Activated T-helper 1 cell treated with anti-CD3 and anti-CD28 coated beads, Interleukin-12 subunit alpha, Interleukin-12 subunit beta, Interleukin-2, Interleukin-4 antibody, amounts not matched to agents 30 ng/mL and 10 ng/mL and 1 ng/mL, durations not matched to agents 14 hours and 24 hours and 36 hours (primary cell): ENCODE measurements at regions of chr14 and their contacts with region 1.

Region 1: DNA sequence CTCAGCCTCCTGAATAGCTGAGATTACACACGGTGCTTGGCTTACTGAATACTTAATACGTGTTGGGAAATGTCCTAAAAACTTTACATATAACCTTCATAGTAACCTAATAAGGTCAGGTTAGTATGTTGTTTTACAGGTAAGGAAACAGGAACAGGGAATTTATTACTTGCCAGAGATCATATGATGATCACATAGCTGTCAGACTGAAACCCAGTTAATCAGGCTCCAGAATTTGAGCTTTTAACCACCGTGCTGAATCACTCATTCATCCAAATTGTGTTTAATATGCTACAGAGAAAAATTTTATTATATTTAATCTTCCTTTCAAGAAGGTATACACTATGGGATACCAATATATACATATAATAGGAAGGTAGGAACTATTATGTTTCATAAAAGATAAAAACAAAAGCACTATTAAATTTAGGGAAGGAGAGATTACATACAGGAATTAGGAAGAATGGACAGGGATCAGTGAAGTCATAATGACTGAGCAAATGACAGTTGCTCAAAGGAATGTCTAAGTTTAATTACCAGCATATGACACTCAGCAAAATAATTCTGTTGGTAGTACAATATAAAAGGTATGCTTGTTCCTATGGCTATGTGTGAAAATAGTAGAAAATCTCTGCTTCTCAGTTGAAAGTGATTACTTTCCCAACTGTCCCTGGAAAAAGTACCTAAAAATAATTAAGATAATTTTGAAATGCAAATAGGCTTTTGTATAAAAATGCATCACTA is 59.3 kb downstream of the HEATR5A start:
- DNase-seq: no peak
- H3K4me3 Mint-ChIP-seq: no peak overlapping the region
- H3K27ac Mint-ChIP-seq: no peak overlapping the region
- H3K4me1 Mint-ChIP-seq: no peaks in the 10 kb centered on the region
- H3K27me3 Mint-ChIP-seq: no peaks in the 10 kb centered on the region

Region 2: GRCh38 chr14:30982533-30982932 is 378.6 kb before region 1 on chr14:
- intact Hi-C with region 1: loop called (anchors 1 kb)
- DNase-seq: no peak
- H3K4me3 Mint-ChIP-seq: no peak overlapping the region
- H3K27ac Mint-ChIP-seq: no peak overlapping the region
- H3K4me1 Mint-ChIP-seq: no peaks in the 10 kb centered on the region
- H3K27me3 Mint-ChIP-seq: no peaks in the 10 kb centered on the region

Region 3: GRCh38 chr14:31084385-31084784 is 276.7 kb before region 1 on chr14:
- intact Hi-C with region 1: loop called (anchors 5 kb)
- DNase-seq: no peak
- H3K4me3 Mint-ChIP-seq: no peak overlapping the region
- H3K27ac Mint-ChIP-seq: no peak overlapping the region
- H3K4me1 Mint-ChIP-seq: no peaks in the 10 kb centered on the region
- H3K27me3 Mint-ChIP-seq: no peaks in the 10 kb centered on the region

Region 4: GRCh38 chr14:31127690-31128089 is 233.4 kb before region 1 on chr14:
- intact Hi-C with region 1: loop called (anchors 5 kb)
- DNase-seq: peak; percentile 56
- H3K4me3 Mint-ChIP-seq: peak overlapping the region; percentile 16
- H3K27ac Mint-ChIP-seq: peak overlapping the region; percentile 64
- H3K4me1 Mint-ChIP-seq: peaks cover 31% of the 10 kb centered on the region
- H3K27me3 Mint-ChIP-seq: no peaks in the 10 kb centered on the region

Region 5: GRCh38 chr14:31159682-31160296 is 201.3 kb before region 1 on chr14:
- intact Hi-C with region 1: loop called (anchors 5 kb)
- DNase-seq: no peak
- H3K4me3 Mint-ChIP-seq: no peak overlapping the region
- H3K27ac Mint-ChIP-seq: no peak overlapping the region
- H3K4me1 Mint-ChIP-seq: no peaks in the 10 kb centered on the region
- H3K27me3 Mint-ChIP-seq: no peaks in the 10 kb centered on the region

Region 6: DNA sequence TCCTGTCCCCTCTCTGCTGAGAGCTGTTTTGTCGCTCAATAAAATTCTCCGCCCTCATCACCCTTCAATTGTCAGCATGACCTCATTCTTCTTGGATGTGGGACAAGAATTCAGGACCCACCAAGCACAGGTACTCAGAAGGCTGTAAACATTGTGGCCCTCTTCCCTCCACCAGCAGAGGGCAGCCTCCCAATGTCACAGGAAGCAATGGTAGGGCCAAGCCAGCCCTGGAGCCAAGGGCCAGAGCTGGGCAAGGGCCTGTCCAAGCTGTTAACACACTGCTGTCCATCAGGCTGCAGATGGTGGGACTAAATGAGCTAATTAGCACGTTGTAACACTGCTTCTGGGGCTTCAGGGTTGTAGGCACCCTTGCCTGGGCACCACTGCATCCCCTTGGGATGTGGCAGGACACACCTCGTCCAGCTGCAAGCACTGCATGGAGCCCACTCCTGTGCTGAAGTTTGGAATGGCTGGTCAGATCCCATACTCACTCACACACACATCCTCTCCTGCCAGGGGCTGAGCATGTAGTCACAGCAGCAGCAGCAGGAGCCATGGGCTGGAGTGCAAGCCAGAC is 90.8 kb before region 1 on chr14:
- intact Hi-C with region 1: loop called (anchors 1 kb)
- DNase-seq: no peak
- H3K4me3 Mint-ChIP-seq: no peak overlapping the region
- H3K27ac Mint-ChIP-seq: no peak overlapping the region
- H3K4me1 Mint-ChIP-seq: peaks cover 12% of the 10 kb centered on the region
- H3K27me3 Mint-ChIP-seq: peaks cover 1% of the 10 kb centered on the region